ENCODE measurements at regions of chr6 and their contacts with region 1.

Region 1: DNA sequence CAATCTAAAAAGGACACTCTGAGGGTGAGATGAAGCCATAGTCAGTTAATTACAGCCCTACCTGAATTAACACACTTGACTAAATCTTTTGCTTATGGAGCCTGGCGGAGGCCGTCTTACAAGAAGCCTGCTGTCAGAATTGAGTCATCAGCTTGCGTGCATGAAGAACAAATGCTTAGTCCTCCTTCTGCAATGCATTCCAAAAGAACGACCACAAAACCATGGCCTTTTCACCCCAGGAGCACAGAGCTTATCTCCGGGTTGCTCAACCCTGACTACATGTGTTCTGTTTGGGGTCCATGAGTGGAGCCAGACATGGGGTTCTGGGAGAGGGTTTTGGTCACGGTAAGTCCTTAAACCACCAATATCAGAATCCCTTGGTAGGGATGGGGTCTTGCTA is 318.1 kb downstream of the CLIC5 start:
- DNase-seq: no peak
- ATAC-seq: no peak
- H3K4me3 ChIP-seq: no peak overlapping the region
- H3K27ac ChIP-seq: no peak overlapping the region
- H3K4me1 ChIP-seq: no peaks in the 10 kb centered on the region
- H3K27me3 ChIP-seq: peaks cover 2 to 5% of the 10 kb centered on the region in 2 experiments; a peak in 2 of 5 replicates
- CTCF ChIP-seq: no peak
- EP300 ChIP-seq: no peak
- POLR2A ChIP-seq: no peak
- RAD21 ChIP-seq: no peak

Region 2: DNA sequence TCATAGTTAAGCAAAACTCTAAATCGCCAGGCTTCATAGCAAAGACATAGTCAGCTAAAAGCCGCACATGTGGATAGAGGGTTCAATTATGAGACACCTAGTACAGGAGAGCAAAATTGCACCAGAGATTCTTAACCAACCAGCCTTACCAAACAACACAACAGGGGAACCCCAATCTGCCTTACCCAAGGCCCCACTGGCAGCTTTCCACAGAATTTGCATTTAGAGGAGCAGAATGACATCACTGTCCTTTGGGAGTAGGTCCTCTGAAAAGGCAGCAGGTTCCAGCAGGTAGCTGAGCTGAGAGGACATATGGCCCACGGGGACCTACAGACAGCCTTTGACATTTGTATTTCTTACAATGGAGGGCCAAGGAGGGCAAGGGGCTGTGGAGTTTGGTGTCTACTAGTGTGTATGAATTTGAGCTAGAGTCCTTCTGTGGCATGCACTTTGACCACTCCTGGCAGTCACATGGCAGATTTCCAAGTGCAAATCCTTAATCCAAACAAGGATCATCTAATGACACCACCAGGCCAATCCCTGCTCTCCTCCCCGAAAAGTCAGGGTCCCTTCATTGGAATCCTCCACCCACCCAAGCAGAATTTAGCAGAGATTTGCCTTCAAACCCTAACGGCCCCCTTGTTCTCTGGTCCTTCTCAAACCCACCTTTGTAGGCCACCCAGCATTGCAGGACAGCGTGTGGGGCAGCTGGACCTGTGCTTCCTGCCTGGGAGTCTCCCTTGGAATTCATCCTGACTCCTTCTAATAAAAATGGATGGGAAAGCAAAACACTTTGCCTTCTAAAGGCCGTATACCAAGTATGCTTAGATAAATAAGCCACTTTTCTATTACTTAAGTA is 148.7 kb before region 1 on chr6:
- CTCF ChIA-PET with region 1: no interaction called
- POLR2A ChIA-PET with region 1: no interaction called
- in situ Hi-C with region 1: no loop called
- intact Hi-C with region 1: no loop called
- DNase-seq: no peak
- ATAC-seq: peak; percentile 31; the same call in 2 of the 3 replicates
- H3K4me3 ChIP-seq: no peak overlapping the region
- H3K27ac ChIP-seq: no peak overlapping the region
- H3K4me1 ChIP-seq: peaks cover 6% of the 10 kb centered on the region
- H3K27me3 ChIP-seq: peaks cover 0 to 5% of the 10 kb centered on the region in 2 experiments; a peak in 2 of 5 replicates
- CTCF ChIP-seq: no peak
- EP300 ChIP-seq: no peak
- POLR2A ChIP-seq: no peak
- RAD21 ChIP-seq: no peak

Region 3: DNA sequence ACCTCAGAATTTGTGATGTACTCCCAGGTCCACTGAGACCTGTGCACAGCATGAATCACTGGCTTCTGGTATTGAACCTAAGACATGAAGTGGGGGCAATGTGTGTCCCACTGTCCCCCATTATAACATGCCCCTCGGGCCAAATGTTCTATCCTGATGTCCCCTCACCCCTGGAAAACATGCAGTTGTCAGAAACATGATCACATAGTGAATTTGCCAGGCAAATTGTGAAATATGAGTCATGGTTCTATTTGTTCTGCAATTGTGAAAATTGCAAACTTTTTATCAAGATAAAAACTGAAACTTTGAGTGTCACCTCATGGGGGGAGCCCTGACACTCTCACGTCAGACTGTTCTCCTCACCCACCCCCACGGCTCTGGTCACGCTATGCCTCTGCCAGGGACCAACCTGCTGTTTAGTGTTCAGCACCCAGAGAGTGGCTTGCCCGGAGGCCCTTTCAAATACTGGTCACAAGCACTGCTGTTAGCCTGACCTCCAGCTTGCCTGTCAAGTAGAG is 12.8 kb after region 1 on chr6:
- CTCF ChIA-PET with region 1: no interaction called
- POLR2A ChIA-PET with region 1: no interaction called
- in situ Hi-C with region 1: no loop called
- intact Hi-C with region 1: no loop called
- DNase-seq: no peak
- ATAC-seq: no peak; the same call in 2 of the 3 replicates
- H3K4me3 ChIP-seq: no peak overlapping the region
- H3K27ac ChIP-seq: no peak overlapping the region
- H3K4me1 ChIP-seq: no peaks in the 10 kb centered on the region
- H3K27me3 ChIP-seq: peaks cover 0 to 9% of the 10 kb centered on the region in 2 experiments; a peak in 4 of 5 replicates
- CTCF ChIP-seq: no peak
- EP300 ChIP-seq: no peak
- POLR2A ChIP-seq: no peak
- RAD21 ChIP-seq: no peak

Region 4: GRCh38 chr6:45900808-45901752 is 203.5 kb after region 1 on chr6:
- CTCF ChIA-PET with region 1: no interaction called
- POLR2A ChIA-PET with region 1: no interaction called
- in situ Hi-C with region 1: no loop called
- intact Hi-C with region 1: loop called (anchors 5 kb)
- DNase-seq: no peak
- ATAC-seq: no peak
- H3K4me3 ChIP-seq: no peak overlapping the region
- H3K27ac ChIP-seq: no peak overlapping the region
- H3K4me1 ChIP-seq: no peaks in the 10 kb centered on the region
- H3K27me3 ChIP-seq: peaks cover 0 to 22% of the 10 kb centered on the region in 2 experiments; a peak in 2 of 5 replicates
- CTCF ChIP-seq: no peak
- EP300 ChIP-seq: no peak
- POLR2A ChIP-seq: no peak
- RAD21 ChIP-seq: no peak